A673 (cell line): ENCODE measurements at regions of chr22 and their contacts with region 1.

Region 1: GRCh38 chr22:29394931-29395581 is 6.7 kb upstream of the AP1B1 start:
- DNase-seq: peak; percentile 87
- H3K4me3 ChIP-seq: no peak overlapping the region
- H3K27ac ChIP-seq: no peak overlapping the region
- H3K4me1 ChIP-seq: no peaks in the 10 kb centered on the region
- H3K27me3 ChIP-seq: no peaks in the 10 kb centered on the region
- CTCF ChIP-seq: peak; percentile 93

Region 2: DNA sequence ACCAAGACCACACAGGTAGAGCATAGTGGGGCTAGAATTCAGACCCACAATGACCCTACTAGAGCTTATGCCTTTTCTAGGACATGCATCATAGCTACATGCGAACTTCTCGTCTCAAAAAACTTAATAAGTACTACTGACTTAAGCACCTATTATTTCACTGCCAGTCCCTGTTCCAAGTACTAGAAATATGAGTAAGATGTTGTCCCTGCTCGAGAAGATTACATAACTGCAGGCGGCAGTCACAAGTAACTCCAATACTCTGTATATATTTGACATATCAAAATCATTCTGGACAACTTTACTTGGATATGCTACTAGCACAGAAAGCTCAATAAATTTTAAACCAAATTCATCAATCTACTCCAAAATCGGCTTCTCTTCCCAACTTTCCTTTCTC is 950.4 kb before region 1 on chr22:
- CTCF ChIA-PET with region 1: no interaction called
- POLR2A ChIA-PET with region 1: no interaction called
- intact Hi-C with region 1: no loop called
- DNase-seq: no peak
- H3K4me3 ChIP-seq: no peak overlapping the region
- H3K27ac ChIP-seq: no peak overlapping the region
- H3K4me1 ChIP-seq: peaks cover 40% of the 10 kb centered on the region
- H3K27me3 ChIP-seq: no peaks in the 10 kb centered on the region
- CTCF ChIP-seq: no peak

Region 3: DNA sequence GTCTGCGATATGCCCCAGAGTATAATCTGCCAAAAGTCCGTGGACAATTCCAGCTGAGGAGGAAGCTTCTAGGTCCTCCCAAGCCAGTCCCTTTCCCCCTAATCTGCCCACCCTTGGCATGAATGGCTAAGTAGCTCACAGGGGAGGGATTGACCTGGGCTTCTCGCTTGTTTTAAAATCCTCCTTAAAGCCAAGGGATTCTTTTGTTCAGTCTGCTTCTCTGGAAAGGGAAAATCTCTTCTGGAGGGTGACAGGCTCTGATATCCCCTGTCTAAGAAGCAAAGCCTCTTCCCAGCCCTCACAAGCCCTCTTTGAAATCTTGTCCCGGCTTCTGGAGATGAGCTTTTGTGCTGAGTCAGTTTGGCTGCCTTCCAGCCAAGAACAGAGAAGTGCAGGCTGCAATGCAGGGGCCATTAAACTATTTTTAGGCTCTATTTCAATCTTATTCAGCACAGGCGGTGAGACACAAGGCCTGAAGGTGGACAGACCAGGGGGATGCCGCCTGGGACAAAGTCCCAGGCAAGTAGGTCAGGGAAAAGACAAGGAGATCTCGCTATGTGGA is 108.8 kb after region 1 on chr22:
- CTCF ChIA-PET with region 1: interaction called, 3 read pairs
- POLR2A ChIA-PET with region 1: no interaction called
- intact Hi-C with region 1: loop called (anchors 10 kb)
- DNase-seq: peak; percentile 84
- H3K4me3 ChIP-seq: no peak overlapping the region
- H3K27ac ChIP-seq: peak overlapping the region; percentile 80
- H3K4me1 ChIP-seq: peaks cover 12% of the 10 kb centered on the region
- H3K27me3 ChIP-seq: no peaks in the 10 kb centered on the region
- CTCF ChIP-seq: no peak